ENCODE measurements at regions of chr4 and their contacts with region 1.

Region 1: GRCh38 chr4:112031712-112032328 is 113.4 kb upstream of the FAM241A start:
- DNase-seq: peak; percentile 61 to 79 (median 77)
- H3K4me3 ChIP-seq: no peak overlapping the region
- H3K27ac ChIP-seq: no peak overlapping the region
- H3K4me1 ChIP-seq: no peaks in the 10 kb centered on the region
- H3K27me3 ChIP-seq: no peaks in the 10 kb centered on the region

Region 2: DNA sequence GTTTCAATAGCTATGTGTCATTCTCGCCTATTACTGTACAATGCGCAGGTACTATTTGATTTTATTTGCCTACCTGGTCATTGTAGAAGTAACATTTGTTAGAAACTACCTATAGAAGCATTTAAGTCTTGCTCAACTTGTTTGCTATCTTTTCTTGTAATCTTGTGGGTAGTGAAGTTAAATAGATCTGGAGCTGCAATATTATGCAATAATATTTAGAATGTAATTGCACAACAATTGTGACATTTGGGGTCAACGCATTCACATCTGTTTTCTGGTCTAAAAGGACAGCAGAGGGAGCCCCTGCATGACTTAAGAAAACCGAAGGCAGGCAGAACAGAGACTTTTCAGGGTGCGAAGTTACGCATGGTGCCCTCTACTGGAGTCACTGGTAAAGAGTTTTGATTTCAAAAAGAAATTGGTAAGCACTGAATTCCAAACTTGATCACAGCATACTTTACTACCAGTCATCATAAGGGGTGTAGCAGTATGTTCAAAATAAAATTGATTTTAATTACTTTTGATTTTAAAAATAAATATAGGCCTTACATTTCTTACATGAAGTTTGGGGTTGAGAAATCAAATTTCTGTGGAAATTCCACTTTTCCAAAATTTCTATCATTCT is 389.8 kb before region 1 on chr4:
- CTCF ChIA-PET with region 1: interaction called, 19 read pairs
- POLR2A ChIA-PET with region 1: no interaction called
- DNase-seq: peak; percentile 91 to 94 (median 93)
- H3K4me3 ChIP-seq: no peak overlapping the region
- H3K27ac ChIP-seq: no peak overlapping the region
- H3K4me1 ChIP-seq: peaks cover 0 to 2% (median 0%) of the 10 kb centered on the region in 4 experiments
- H3K27me3 ChIP-seq: peaks cover 0 to 5% (median 3%) of the 10 kb centered on the region in 5 experiments

Region 3: DNA sequence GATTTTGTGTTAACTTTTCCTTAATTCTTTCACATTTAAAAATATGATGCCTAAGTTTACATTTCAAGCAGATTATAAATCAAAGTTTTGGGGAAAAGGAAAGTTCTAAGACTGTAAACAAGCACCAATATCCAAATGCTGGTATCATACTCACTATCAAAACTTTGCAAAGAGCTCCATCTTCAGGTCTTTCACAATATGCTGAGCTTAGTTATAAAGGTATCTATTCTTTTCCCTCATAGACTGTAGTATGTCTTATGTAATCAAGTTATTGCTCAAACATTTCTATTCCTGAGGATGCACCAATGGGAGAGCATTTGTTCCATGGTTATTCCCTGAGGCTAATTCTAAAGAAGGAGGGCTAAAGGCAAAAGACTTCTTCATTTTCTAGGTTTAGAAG is 94.5 kb before region 1 on chr4:
- CTCF ChIA-PET with region 1: interaction called, 88 read pairs
- POLR2A ChIA-PET with region 1: no interaction called
- DNase-seq: peak; percentile 40 to 49 (median 43)
- H3K4me3 ChIP-seq: no peak overlapping the region
- H3K27ac ChIP-seq: no peak overlapping the region
- H3K4me1 ChIP-seq: peaks cover 0 to 7% (median 2%) of the 10 kb centered on the region in 4 experiments
- H3K27me3 ChIP-seq: peaks cover 0 to 30% (median 14%) of the 10 kb centered on the region in 5 experiments

Region 4: GRCh38 chr4:111943795-111944203 is 88.0 kb before region 1 on chr4:
- CTCF ChIA-PET with region 1: interaction called, 88 read pairs
- POLR2A ChIA-PET with region 1: no interaction called
- DNase-seq: peak; percentile 60 to 73 (median 67)
- H3K4me3 ChIP-seq: peak overlapping the region in 1 of 7 experiments; percentile 31
- H3K27ac ChIP-seq: no peak overlapping the region
- H3K4me1 ChIP-seq: peaks cover 0 to 4% (median 0%) of the 10 kb centered on the region in 4 experiments
- H3K27me3 ChIP-seq: peaks cover 0 to 1% (median 0%) of the 10 kb centered on the region in 5 experiments

Region 5: GRCh38 chr4:112060212-112060611 is 28.4 kb after region 1 on chr4:
- CTCF ChIA-PET with region 1: interaction called, 10 read pairs
- POLR2A ChIA-PET with region 1: no interaction called
- DNase-seq: peak; percentile 47 to 63 (median 54)
- H3K4me3 ChIP-seq: no peak overlapping the region
- H3K27ac ChIP-seq: no peak overlapping the region
- H3K4me1 ChIP-seq: peaks cover 0 to 20% (median 10%) of the 10 kb centered on the region in 4 experiments
- H3K27me3 ChIP-seq: no peaks in the 10 kb centered on the region